ENCODE measurements at regions of chrX and their contacts with region 1.

Region 1: GRCh38 chrX:85611926-85612325 is 232.5 kb upstream of the POF1B start:
- DNase-seq: peak; percentile 38
- H3K4me3 Mint-ChIP-seq: no peak overlapping the region
- H3K27ac Mint-ChIP-seq: no peak overlapping the region
- H3K4me1 Mint-ChIP-seq: peaks cover 5% of the 10 kb centered on the region
- H3K27me3 Mint-ChIP-seq: peaks cover 3% of the 10 kb centered on the region
- CTCF ChIP-seq: peak; percentile 45

Region 2: GRCh38 chrX:86171366-86171765 is 559.4 kb after region 1 on chrX:
- CTCF ChIA-PET with region 1: no interaction called
- POLR2A ChIA-PET with region 1: no interaction called
- intact Hi-C with region 1: loop called (anchors 5 kb)
- DNase-seq: peak; percentile 61
- H3K4me3 Mint-ChIP-seq: no peak overlapping the region
- H3K27ac Mint-ChIP-seq: no peak overlapping the region
- H3K4me1 Mint-ChIP-seq: no peaks in the 10 kb centered on the region
- H3K27me3 Mint-ChIP-seq: peaks cover 71% of the 10 kb centered on the region
- CTCF ChIP-seq: peak; percentile 26

Region 3: GRCh38 chrX:86348669-86349068 is 736.7 kb after region 1 on chrX:
- CTCF ChIA-PET with region 1: no interaction called
- POLR2A ChIA-PET with region 1: no interaction called
- intact Hi-C with region 1: no loop called
- DNase-seq: peak; percentile 3
- H3K4me3 Mint-ChIP-seq: no peak overlapping the region
- H3K27ac Mint-ChIP-seq: no peak overlapping the region
- H3K4me1 Mint-ChIP-seq: no peaks in the 10 kb centered on the region
- H3K27me3 Mint-ChIP-seq: no peaks in the 10 kb centered on the region
- CTCF ChIP-seq: peak; percentile 15

Region 4: DNA sequence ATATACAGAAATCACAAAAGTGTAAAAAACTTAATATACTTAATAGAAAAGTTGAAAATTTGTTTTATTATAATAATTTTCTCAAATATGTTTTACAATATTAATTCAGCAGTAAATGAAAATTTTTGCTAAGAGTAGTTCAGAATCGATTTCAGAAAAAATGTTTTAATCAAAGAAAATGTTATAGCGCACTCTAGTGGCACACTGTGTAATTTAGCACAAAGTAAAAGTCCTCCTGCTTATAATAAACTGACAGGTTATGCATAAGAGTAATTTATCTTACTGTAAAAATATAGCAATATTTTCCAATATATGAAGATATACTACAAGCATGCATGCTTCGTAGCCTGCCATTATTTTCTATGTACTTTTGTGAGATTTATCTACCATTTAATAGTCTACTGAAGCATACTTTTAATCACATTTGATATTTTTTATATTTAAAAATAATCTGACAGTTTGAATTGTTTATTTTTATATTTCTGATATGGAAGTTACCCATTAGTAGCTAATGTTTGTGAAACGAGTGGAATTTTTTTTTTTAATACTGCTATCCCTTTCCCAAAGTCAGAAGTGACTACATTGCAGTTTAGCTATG is 1687.7 kb after region 1 on chrX:
- CTCF ChIA-PET with region 1: interaction called, 3 read pairs
- POLR2A ChIA-PET with region 1: no interaction called
- intact Hi-C with region 1: loop called (anchors 1 kb)
- DNase-seq: peak; percentile 47
- H3K4me3 Mint-ChIP-seq: no peak overlapping the region
- H3K27ac Mint-ChIP-seq: no peak overlapping the region
- H3K4me1 Mint-ChIP-seq: no peaks in the 10 kb centered on the region
- H3K27me3 Mint-ChIP-seq: peaks cover 10% of the 10 kb centered on the region
- CTCF ChIP-seq: peak; percentile 48

Measured in MCF 10A (cell line).